OCI-LY7 (cell line): ENCODE measurements at regions of chr19 and their contacts with region 1.

Region 1: GRCh38 chr19:35628565-35629331 is at the start of gene RBM42:
- DNase-seq: peak; percentile 99
- H3K4me3 ChIP-seq: peak within 1 kb of the TSS; percentile 83
- H3K27ac ChIP-seq: peak within 1 kb of the TSS; percentile 68
- H3K4me1 ChIP-seq: peaks cover 18% of the 10 kb centered on the region
- CTCF ChIP-seq: no peak
- total RNA-seq, gene RBM42: 62.0 and 73.6 TPM in 2 replicates

Region 2: GRCh38 chr19:35557539-35558399 is 71.0 kb before region 1 on chr19:
- CTCF ChIA-PET with region 1: no interaction called
- POLR2A ChIA-PET with region 1: no interaction called
- intact Hi-C with region 1: loop called (anchors 5 kb)
- DNase-seq: peak; percentile 35
- H3K4me3 ChIP-seq: no peak overlapping the region
- H3K27ac ChIP-seq: no peak overlapping the region
- H3K4me1 ChIP-seq: peaks cover 18% of the 10 kb centered on the region
- CTCF ChIP-seq: no peak